Heart right ventricle (tissue), 16 donors: ENCODE measurements at regions of chrX and their contacts with region 1.

Region 1: GRCh38 chrX:130994671-130995070 is 63.5 kb upstream of the ARHGAP36 start:
- DNase-seq: no peak
- ATAC-seq: no peak
- H3K4me3 ChIP-seq: no peak overlapping the region
- H3K27ac ChIP-seq: no peak overlapping the region
- H3K4me1 ChIP-seq: no peaks in the 10 kb centered on the region
- H3K27me3 ChIP-seq: peaks cover 0 to 52% (median 0%) of the 10 kb centered on the region in 7 donors
- CTCF ChIP-seq: peak in 7 of 9 donors; percentile 24 to 50 (median 38)

Region 2: DNA sequence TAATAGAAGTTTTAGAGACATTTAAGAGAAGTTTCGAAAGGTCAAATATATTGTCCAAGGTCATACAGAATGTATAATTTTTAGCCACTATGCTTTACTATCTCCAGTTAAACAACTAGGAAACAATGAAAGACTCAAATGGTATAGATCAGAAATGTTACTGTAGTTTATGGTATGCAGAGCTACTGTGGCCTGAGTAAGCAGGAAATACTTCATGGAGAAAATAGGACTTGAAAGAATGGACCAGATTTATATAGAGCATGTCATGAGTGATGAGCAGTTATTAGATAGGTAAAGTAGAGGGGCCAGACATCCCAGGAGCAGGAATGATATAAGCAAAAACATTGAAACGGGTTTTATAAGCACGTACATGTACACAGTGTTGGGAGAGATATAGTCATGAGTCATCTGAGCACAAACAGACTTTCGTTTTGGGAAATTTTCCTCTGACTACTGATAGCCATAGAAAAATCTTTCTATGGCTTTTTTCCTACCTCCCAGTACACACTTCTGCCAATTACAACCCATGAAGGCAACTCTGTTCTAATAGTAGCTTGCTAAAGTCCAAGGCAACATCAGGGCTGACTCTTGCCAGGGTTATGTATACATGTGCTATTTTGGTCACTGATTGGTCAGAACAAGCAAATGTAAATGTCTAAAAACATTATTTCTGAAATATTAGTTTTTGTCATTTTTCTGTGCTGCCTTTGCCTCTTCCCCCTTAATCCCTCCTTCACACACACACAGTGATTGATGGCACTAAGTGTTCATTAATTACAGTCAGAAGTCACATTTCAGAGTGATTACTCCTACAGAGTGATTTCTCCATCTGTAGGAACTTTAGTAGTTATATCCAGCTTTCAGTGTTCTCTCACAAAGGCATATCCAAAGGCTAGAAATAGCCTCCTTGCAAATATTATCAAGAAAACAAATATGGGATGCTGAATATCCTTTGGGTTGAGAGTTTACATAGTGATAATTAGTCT is 290.3 kb before region 1 on chrX:
- intact Hi-C with region 1: no loop called
- DNase-seq: no peak
- ATAC-seq: peak in 3 of 8 donors; percentile 15 to 44 (median 39)
- H3K4me3 ChIP-seq: no peak overlapping the region
- H3K27ac ChIP-seq: peak overlapping the region in 5 of 10 donors; percentile 23 to 53 (median 30)
- H3K4me1 ChIP-seq: peaks cover 0 to 23% (median 0%) of the 10 kb centered on the region in 9 donors
- H3K27me3 ChIP-seq: peaks cover 0 to 2% (median 0%) of the 10 kb centered on the region in 7 donors
- CTCF ChIP-seq: no peak

Region 3: GRCh38 chrX:131633285-131633917 is 638.7 kb after region 1 on chrX:
- intact Hi-C with region 1: loop called in 1 of 10 experiments (anchors 10 kb)
- DNase-seq: peak in 1 of 2 donors; percentile 29
- ATAC-seq: peak in 3 of 8 donors; percentile 56 to 71 (median 66)
- H3K4me3 ChIP-seq: no peak overlapping the region
- H3K27ac ChIP-seq: no peak overlapping the region
- H3K4me1 ChIP-seq: no peaks in the 10 kb centered on the region
- H3K27me3 ChIP-seq: peaks cover 0 to 95% (median 0%) of the 10 kb centered on the region in 7 donors
- CTCF ChIP-seq: peak; percentile 36 to 86 (median 68)